BJ (cell line): ENCODE measurements at regions of chr7 and their contacts with region 1.

Region 1: GRCh38 chr7:143214789-143215679 is 6.8 kb upstream of the TAS2R40 start:
- DNase-seq: peak; percentile 39
- H3K4me3 ChIP-seq: no peak overlapping the region
- H3K27me3 ChIP-seq: no peaks in the 10 kb centered on the region
- CTCF ChIP-seq: peak; percentile 99

Region 2: DNA sequence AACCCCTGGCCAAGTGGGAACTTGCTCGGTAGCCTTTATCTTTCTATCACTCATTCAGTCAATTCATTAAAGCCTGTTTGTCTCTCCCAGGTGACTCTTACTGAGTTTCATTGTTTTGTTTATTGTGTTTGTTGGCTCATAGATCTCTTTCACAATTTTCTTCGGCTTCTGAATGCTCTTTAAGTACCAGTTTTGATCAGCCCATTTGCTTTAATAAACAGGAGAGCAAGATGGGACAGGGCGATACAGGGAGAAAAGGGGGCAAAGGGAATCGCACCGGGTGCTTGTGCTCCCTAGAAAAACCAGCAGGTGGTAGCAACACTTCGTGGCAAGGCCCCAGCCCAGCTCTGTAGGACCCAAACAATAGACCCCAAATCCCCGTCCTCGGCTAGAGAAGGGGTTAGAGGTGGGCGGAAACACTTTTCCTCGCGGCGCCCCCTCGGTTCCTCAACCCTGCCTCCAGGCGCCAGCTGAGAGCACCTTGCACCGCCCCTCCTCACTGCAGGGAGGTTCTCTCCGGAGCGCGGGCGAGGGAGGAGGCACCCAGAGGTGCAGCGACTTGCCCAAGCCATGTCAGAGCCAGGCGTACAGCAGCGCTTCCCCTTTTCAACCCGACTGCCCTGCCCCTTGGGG is 361.2 kb before region 1 on chr7:
- CTCF ChIA-PET with region 1: interaction called, 14 read pairs
- POLR2A ChIA-PET with region 1: no interaction called
- DNase-seq: no peak
- H3K4me3 ChIP-seq: peak overlapping the region; percentile 55
- H3K27me3 ChIP-seq: peaks cover 7% of the 10 kb centered on the region
- CTCF ChIP-seq: peak; percentile 83

Region 3: DNA sequence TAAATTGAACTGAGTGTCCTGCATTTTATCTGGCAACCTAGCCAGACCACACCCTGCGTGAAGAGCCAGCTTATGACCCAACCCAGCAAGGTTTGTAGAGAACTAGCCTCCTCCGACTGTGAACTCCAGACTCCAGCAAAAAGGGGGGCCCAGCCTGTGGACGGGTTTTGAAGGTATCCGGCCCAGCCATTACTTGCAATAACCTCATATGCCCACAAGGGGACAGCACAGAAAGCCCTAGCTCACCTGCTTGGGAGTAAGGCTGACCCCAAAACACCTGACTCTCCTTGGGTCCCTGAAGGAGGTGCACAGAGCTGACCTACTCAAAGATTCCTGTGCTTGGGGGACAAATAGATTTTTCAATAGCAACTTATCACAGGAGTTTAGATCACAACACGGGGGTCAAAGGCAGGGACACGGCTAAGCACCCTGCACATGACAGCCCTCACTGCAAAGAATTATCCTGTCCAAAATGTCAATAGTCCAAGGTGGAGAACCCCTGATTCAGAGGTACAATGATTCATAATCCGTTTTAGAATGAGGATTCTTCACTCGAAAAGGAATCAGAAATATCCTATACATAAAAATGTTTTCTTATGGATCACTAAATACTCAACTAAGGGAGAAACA is 334.0 kb before region 1 on chr7:
- CTCF ChIA-PET with region 1: interaction called, 22 read pairs
- POLR2A ChIA-PET with region 1: no interaction called
- DNase-seq: no peak
- H3K4me3 ChIP-seq: no peak overlapping the region
- H3K27me3 ChIP-seq: peaks cover 2% of the 10 kb centered on the region
- CTCF ChIP-seq: peak; percentile 86

Region 4: GRCh38 chr7:143013893-143014292 is 201.1 kb before region 1 on chr7:
- CTCF ChIA-PET with region 1: interaction called, 392 read pairs
- POLR2A ChIA-PET with region 1: no interaction called
- DNase-seq: peak; percentile 62
- H3K4me3 ChIP-seq: no peak overlapping the region
- H3K27me3 ChIP-seq: no peaks in the 10 kb centered on the region
- CTCF ChIP-seq: no peak

Region 5: GRCh38 chr7:143188994-143189393 is 26.0 kb before region 1 on chr7:
- CTCF ChIA-PET with region 1: interaction called, 11 read pairs
- POLR2A ChIA-PET with region 1: no interaction called
- DNase-seq: no peak
- H3K4me3 ChIP-seq: no peak overlapping the region
- H3K27me3 ChIP-seq: no peaks in the 10 kb centered on the region
- CTCF ChIP-seq: no peak

Region 6: DNA sequence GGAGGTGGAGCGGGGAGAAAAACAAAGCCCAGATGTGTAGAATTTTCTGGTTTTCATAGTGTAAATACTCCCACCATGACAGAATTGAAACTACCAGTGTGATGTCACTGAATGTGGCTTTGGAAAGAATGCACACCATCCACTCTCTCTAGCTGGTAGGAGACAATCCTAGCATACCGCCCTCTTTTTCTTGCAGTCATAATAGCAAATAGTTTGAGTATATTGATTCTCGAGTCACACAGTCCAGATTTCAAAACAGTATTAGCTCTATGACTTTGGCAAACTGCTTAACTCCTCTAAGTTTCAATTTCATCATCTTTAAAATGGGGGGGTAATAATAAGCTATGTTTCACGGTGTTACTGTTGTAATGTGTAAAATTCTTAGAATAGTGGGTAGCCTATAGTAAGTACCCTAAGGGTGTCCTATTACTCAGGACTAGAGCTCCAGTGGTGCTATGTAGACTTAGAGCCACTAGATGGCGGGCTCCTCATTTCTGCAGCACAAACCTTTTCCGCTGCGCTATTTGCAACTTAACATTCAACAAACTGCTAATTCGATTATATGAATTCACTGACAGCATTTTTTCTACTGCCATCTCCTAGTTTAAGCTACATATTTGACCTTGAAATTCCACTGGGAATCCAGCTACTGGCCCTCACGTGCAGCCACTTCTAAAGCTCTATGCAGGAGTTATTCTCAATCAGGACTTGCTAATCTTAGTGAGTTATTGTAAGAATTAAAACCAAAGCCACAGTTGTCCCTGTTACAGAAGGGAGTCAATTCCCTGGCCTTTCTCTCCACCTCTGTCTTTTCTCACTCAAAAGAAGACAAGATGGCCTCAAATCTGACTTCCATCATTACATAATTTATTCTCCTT is 25.5 kb after region 1 on chr7:
- CTCF ChIA-PET with region 1: interaction called, 13 read pairs
- POLR2A ChIA-PET with region 1: no interaction called
- DNase-seq: peak; percentile 78
- H3K4me3 ChIP-seq: no peak overlapping the region
- H3K27me3 ChIP-seq: peaks cover 6% of the 10 kb centered on the region
- CTCF ChIP-seq: peak; percentile 88